Heart right ventricle (tissue), 16 donors: ENCODE measurements at regions of chr4 and their contacts with region 1.

Region 1: DNA sequence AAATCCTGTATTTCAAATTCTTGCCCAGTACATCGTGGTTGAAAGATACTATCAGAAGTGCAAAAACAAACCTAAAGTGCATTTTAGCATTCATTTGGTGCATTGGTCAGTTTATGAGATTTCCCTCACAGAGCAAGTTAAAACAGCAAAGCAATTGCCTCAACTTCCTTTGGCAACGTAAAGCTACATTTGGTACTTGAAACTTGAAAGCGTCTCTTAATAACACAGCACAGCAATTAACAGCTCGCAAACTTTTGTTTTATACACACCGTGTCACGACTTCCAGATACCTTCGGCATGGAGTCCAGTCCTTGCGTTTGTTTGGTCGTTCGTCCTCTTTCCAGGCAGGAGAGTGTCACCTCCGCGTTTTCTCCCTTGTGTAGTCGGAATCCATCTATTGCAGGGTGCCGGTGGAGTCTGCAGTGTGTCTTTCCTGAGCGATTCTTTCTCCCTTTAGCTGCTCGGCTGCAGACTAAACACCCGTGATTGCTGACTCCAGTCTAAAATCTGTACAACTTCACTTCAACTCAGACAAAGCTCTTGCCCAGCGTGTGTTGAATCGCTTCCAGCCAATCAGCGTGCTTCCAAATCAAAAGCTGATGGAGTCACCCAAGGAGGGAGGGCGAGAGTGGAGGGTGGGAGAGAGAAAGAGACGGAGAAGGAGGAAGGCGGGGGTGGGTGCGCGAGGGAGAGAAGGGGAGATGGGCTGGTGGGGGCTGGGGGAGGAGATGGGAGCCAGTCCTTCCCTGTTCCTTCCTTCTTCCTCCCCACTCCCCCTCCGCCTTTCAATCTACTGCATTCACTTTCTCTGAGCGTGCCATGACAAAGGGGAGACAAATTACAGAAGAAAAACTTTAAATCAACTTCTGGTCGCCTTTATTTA is at the start of gene PCDH18:
- DNase-seq: peak; percentile 75 to 92
- ATAC-seq: peak; percentile 82 to 95 (median 92)
- H3K4me3 ChIP-seq: peak within 1 kb of the TSS; percentile 24 to 69 (median 55)
- H3K27ac ChIP-seq: peak within 1 kb of the TSS; percentile 45 to 86 (median 80)
- H3K4me1 ChIP-seq: peaks cover 0 to 12% (median 0%) of the 10 kb centered on the region in 9 donors
- H3K27me3 ChIP-seq: peaks cover 0 to 5% (median 0%) of the 10 kb centered on the region in 7 donors
- CTCF ChIP-seq: no peak
- total RNA-seq, gene PCDH18: 2.6 to 7.4 (median 4.2) TPM

Region 2: DNA sequence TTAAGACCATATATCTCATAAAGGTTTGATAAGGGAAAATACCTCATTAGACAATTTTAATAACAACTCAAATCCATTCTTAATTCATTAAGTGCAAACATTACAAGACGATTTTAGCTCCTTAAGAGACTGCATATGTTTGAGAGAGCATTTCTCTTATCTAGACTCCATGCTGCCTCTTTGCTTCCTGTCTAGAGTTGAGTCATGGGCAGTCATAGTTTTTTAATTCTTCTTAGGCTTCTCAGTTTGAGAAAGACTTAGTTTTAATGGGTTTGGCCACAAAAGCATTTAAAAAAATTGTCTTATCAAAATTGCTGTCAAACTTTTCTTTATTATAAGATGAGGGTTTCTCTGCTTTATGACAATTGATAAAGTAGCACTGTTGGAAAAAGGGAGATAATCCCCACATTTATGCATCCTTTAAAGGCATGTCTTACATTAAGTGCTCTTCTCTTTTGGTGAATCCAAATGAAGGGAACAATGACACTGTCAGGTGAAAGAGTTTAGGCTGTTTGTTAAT is 713.4 kb before region 1 on chr4:
- intact Hi-C with region 1: no loop called
- DNase-seq: no peak
- ATAC-seq: no peak
- H3K4me3 ChIP-seq: no peak overlapping the region
- H3K27ac ChIP-seq: no peak overlapping the region
- H3K4me1 ChIP-seq: no peaks in the 10 kb centered on the region
- H3K27me3 ChIP-seq: no peaks in the 10 kb centered on the region
- CTCF ChIP-seq: no peak

Region 3: DNA sequence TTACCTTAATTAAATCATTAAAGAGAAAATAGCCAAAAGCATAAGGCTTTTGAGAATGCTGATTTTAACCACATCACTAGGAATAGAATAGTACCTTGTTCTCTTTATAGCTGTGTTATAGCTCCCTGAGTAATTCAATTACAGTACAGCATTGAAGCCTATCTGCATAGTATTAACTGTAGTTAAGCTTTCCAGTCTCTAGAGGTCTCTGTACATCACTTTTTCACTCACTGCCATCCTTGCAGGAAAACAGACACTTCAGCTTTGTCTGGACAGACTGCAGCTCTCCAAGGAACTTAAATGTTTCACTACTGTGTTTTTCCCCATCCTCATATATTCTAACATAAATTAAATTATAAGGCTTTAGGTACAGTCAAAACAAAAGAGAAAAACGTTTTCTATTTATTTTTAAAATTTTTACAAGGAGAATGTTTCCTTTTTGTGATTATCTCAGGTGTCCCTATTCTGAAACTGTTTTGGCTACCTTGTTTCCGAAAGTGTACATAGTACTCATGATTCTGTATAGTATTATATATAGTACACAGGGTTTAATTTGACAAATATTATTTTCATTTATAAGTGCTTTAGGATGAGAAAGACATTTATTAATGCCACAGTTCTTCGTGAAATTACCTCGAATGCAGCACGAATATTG is 407.8 kb before region 1 on chr4:
- intact Hi-C with region 1: loop called in 2 of 10 experiments (anchors 10 kb)
- DNase-seq: peak in 1 of 2 donors; percentile 5
- ATAC-seq: peak; percentile 78 to 97 (median 88)
- H3K4me3 ChIP-seq: peak overlapping the region; percentile 2 to 52 (median 30)
- H3K27ac ChIP-seq: peak overlapping the region in 1 of 10 donors; percentile 14
- H3K4me1 ChIP-seq: no peaks in the 10 kb centered on the region
- H3K27me3 ChIP-seq: no peaks in the 10 kb centered on the region
- CTCF ChIP-seq: peak in 8 of 9 donors; percentile 16 to 80 (median 64)

Region 4: GRCh38 chr4:137393044-137393443 is 139.2 kb before region 1 on chr4:
- intact Hi-C with region 1: loop called in 2 of 10 experiments (anchors 10 kb)
- DNase-seq: peak in 1 of 2 donors; percentile 36
- ATAC-seq: peak in 7 of 8 donors; percentile 33 to 87 (median 73)
- H3K4me3 ChIP-seq: no peak overlapping the region
- H3K27ac ChIP-seq: peak overlapping the region in 2 of 10 donors; percentile 27 to 43
- H3K4me1 ChIP-seq: peaks cover 0 to 37% (median 0%) of the 10 kb centered on the region in 9 donors
- H3K27me3 ChIP-seq: no peaks in the 10 kb centered on the region
- CTCF ChIP-seq: no peak

Region 5: GRCh38 chr4:137576446-137576845 is 44.2 kb after region 1 on chr4:
- intact Hi-C with region 1: no loop called
- DNase-seq: no peak
- ATAC-seq: no peak
- H3K4me3 ChIP-seq: no peak overlapping the region
- H3K27ac ChIP-seq: peak overlapping the region in 1 of 10 donors; percentile 3
- H3K4me1 ChIP-seq: peaks cover 0 to 10% (median 0%) of the 10 kb centered on the region in 9 donors
- H3K27me3 ChIP-seq: no peaks in the 10 kb centered on the region
- CTCF ChIP-seq: no peak

Region 6: DNA sequence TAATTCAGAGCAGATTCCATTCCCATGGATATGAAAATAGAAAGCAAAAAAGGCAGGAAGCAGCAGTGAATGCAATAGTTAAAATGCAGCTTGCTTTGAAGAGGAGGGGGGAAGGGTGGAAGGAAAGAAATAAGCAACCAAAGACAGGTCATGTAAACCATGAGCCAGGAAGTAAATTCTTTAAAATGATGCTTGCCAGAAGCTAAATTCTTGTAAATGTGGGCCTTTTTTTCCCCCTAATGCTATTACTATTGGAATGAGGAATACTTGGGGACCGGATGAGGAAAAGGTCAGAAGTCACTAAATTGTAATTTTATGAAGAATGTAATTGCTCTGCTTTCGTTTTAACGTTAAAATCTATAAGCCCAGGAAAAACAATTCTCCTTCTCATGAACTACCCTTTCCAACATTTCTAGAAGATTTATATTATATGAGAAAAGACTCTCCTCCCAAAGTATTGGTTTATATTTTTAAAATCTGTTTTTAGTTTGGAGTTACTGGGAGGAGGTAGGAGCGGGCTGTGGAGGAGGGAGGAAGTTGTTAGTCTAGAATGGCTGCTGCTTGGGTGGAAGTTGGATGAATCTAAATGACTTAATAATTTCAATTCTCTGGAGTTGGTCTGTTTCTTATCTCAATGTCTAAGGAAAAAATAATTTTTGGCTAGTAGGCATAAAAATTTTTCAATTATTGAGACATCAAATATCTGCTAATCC is 77.6 kb after region 1 on chr4:
- intact Hi-C with region 1: loop called in 2 of 10 experiments (anchors 10 kb)
- DNase-seq: no peak
- ATAC-seq: peak in 5 of 8 donors; percentile 44 to 64 (median 58)
- H3K4me3 ChIP-seq: peak overlapping the region in 5 of 10 donors; percentile 4 to 31 (median 20)
- H3K27ac ChIP-seq: peak overlapping the region in 8 of 10 donors; percentile 2 to 78 (median 31)
- H3K4me1 ChIP-seq: peaks cover 0 to 3% (median 0%) of the 10 kb centered on the region in 9 donors
- H3K27me3 ChIP-seq: no peaks in the 10 kb centered on the region
- CTCF ChIP-seq: no peak

Region 7: DNA sequence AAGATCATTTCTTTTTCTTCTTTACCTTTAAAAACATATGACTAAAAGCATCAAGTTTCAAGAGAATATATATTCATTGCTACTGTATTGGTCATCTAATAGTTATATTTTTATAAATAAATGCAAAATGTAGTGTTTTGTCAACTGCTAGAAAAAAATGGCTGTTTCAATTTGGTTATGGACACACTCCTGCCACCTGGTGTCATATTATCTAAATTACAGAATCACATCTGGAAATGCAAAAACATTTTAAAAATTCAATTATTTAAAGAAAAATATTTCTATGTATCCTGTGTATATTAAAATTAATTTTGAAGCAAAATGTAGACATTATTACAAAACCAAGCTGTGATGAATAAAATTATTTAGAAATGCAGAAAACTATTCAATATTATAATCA is 329.5 kb after region 1 on chr4:
- intact Hi-C with region 1: loop called in 1 of 10 experiments (anchors 5 kb)
- DNase-seq: no peak
- ATAC-seq: no peak
- H3K4me3 ChIP-seq: no peak overlapping the region
- H3K27ac ChIP-seq: no peak overlapping the region
- H3K4me1 ChIP-seq: no peaks in the 10 kb centered on the region
- H3K27me3 ChIP-seq: no peaks in the 10 kb centered on the region
- CTCF ChIP-seq: peak in 7 of 9 donors; percentile 41 to 69 (median 51)

Region 8: DNA sequence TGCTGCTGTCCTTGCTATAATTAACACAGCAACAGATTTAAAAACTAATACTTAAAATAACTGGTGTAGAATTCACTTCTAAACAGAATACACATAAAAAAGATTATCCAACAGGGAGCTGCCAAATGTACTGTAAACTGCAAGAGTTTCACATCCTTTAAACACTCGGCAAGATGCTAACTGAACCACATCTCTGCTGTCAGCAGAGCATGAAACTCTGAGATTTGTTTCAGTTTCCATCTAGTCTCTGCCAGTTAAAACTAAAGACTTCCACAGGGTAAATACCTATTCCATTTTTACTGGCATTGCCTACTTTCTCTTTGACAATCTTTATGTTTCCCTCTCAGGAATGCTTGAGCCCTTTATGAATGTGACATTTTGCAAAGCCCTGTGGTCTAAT is 582.2 kb after region 1 on chr4:
- intact Hi-C with region 1: no loop called
- DNase-seq: no peak
- ATAC-seq: no peak
- H3K4me3 ChIP-seq: no peak overlapping the region
- H3K27ac ChIP-seq: no peak overlapping the region
- H3K4me1 ChIP-seq: no peaks in the 10 kb centered on the region
- H3K27me3 ChIP-seq: no peaks in the 10 kb centered on the region
- CTCF ChIP-seq: no peak